Caco-2 (cell line): ENCODE measurements at regions of chr10 and their contacts with region 1.

Region 1: GRCh38 chr10:72319416-72320254 is 35.1 kb downstream of the DNAJB12 start:
- DNase-seq: peak; percentile 88 to 98
- H3K4me3 ChIP-seq: peak overlapping the region; percentile 31
- H3K4me3 Mint-ChIP-seq: peak overlapping the region; percentile 60
- H3K27ac Mint-ChIP-seq: peak overlapping the region; percentile 99
- H3K4me1 ChIP-seq: peaks cover 44% of the 10 kb centered on the region
- H3K4me1 Mint-ChIP-seq: peaks cover 49% of the 10 kb centered on the region
- H3K27me3 ChIP-seq: no peaks in the 10 kb centered on the region
- H3K27me3 Mint-ChIP-seq: no peaks in the 10 kb centered on the region
- CTCF ChIP-seq: no peak

Region 2: DNA sequence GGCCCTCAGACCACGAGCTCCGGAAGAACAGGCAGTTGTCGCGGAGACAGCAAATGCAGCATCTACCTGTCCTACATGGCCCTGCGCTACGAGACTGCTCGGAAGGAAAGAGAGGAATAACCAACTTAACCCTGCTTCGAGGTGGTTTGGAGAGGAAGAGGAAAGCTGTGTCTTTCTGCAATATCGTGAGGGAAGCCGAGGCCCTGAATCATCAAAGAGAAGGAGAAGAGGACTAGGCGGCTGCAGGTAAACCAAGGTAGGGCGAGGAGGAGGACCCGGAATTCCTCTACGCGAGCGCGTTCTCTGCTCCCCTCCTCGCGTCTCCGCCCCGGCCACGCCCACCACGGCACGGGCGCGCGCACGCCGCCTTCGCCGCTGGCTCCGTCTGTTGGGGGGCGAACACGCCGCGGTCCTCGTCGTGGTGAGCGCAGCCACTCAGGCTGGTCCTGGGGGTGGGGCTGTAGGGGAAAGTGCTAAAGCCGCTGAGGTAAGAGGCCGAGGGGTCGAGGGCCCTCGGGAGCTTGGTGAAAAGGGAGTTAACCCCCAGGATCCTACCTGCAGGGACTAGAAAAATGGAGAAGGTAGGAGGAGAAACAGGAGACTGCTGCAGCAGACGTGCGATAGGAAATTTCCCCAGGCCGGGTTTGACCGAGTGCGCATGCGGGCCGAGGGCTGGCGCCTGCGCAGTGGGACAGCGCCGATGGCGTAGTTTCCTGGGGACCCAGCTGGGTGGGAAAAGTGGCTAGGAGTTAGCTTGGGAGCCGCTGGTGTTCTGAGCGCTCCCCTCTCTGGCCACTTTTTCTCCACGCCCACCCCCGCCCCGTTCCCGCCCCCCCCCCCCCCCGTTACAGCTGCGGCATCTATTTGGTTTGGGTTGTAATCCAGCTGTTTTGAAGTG is 103.7 kb before region 1 on chr10 and contains the starts of genes ANAPC16 and ASCC1:
- CTCF ChIA-PET with region 1: interaction called, 6 read pairs
- POLR2A ChIA-PET with region 1: interaction called, 12 read pairs
- intact Hi-C with region 1: no loop called
- DNase-seq: peak; percentile 94 to 99
- H3K4me3 ChIP-seq: peak within 1 kb of the TSS; percentile 77
- H3K4me3 Mint-ChIP-seq: peak within 1 kb of the TSS; percentile 94
- H3K27ac Mint-ChIP-seq: peak within 1 kb of the TSS; percentile 92
- H3K4me1 ChIP-seq: peaks cover 13% of the 10 kb centered on the region; the same call in 1 of the 2 replicates
- H3K4me1 Mint-ChIP-seq: peaks cover 8% of the 10 kb centered on the region
- H3K27me3 ChIP-seq: no peaks in the 10 kb centered on the region
- H3K27me3 Mint-ChIP-seq: no peaks in the 10 kb centered on the region
- CTCF ChIP-seq: no peak
- total RNA-seq, gene ANAPC16: 134 and 144 TPM in 2 replicates
- total RNA-seq, gene ASCC1: 60.1 and 73.7 TPM in 2 replicates

Region 3: DNA sequence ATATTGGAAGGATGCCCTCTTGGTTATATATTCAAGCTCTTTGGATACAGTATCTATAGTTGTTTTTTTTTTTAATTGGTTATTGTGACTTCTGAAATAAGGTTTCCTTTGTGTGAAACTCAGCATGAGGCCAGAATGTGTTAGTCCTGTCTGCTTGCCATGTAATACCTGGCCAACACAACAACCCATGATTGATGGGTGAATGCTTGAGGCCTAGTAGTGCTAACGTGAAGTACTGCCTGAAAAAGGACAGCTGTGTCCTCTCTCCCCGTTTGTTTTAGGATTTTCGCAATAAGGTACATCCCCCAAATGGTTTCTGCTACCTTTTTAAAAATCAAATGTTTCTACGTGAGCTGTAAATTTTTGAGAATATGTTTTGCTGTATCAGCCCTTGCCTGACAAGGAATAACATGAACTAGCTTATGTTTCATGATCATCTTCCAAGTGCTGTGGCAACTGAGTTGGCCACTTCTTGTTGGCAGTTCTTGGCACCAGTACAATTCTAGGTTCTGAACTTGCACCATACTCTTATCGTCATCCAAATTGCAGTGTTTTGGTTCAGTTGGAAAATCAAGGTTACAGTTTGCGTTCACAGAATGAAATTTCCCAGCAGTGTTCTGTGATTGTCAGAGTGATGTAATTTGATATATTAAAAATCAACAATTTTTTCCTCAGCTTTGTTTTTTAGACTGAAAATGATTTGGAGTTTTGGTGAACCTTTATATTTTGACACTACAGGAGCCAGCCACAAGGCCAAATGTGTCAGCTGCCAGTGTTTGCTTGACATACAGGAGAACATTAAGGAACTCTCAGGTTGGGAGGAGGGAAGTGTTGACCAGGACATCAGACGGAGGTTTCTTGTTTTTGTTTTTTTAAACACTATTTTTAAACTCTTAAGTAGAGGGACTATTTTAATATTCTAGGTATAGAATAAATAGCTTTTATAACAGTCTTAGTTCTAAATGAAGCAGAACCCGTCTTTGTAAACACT is 90.1 kb before region 1 on chr10:
- CTCF ChIA-PET with region 1: no interaction called
- POLR2A ChIA-PET with region 1: interaction called, 12 read pairs
- intact Hi-C with region 1: no loop called
- DNase-seq: no peak
- H3K4me3 ChIP-seq: no peak overlapping the region
- H3K4me3 Mint-ChIP-seq: no peak overlapping the region
- H3K27ac Mint-ChIP-seq: no peak overlapping the region
- H3K4me1 ChIP-seq: no peaks in the 10 kb centered on the region
- H3K4me1 Mint-ChIP-seq: peaks cover 18% of the 10 kb centered on the region
- H3K27me3 ChIP-seq: no peaks in the 10 kb centered on the region
- H3K27me3 Mint-ChIP-seq: no peaks in the 10 kb centered on the region
- CTCF ChIP-seq: no peak

Region 4: GRCh38 chr10:72260588-72261322 is 58.9 kb before region 1 on chr10:
- CTCF ChIA-PET with region 1: interaction called, 17 read pairs
- POLR2A ChIA-PET with region 1: interaction called, 36 read pairs
- intact Hi-C with region 1: loop called (anchors 1 kb)
- DNase-seq: peak; percentile 94 to 98
- H3K4me3 ChIP-seq: peak overlapping the region; percentile 61
- H3K4me3 Mint-ChIP-seq: peak overlapping the region; percentile 91
- H3K27ac Mint-ChIP-seq: peak overlapping the region; percentile 96
- H3K4me1 ChIP-seq: peaks cover 22% of the 10 kb centered on the region
- H3K4me1 Mint-ChIP-seq: peaks cover 29% of the 10 kb centered on the region
- H3K27me3 ChIP-seq: no peaks in the 10 kb centered on the region
- H3K27me3 Mint-ChIP-seq: no peaks in the 10 kb centered on the region
- CTCF ChIP-seq: peak in 1 of 2 experiments; percentile 31

Region 5: GRCh38 chr10:72278668-72279393 is 40.8 kb before region 1 on chr10:
- CTCF ChIA-PET with region 1: interaction called, 10 read pairs
- POLR2A ChIA-PET with region 1: interaction called, 127 read pairs
- intact Hi-C with region 1: loop called (anchors 1 kb)
- DNase-seq: no peak
- H3K4me3 ChIP-seq: no peak overlapping the region
- H3K4me3 Mint-ChIP-seq: no peak overlapping the region
- H3K27ac Mint-ChIP-seq: no peak overlapping the region
- H3K4me1 ChIP-seq: peaks cover 15% of the 10 kb centered on the region
- H3K4me1 Mint-ChIP-seq: peaks cover 31% of the 10 kb centered on the region
- H3K27me3 ChIP-seq: no peaks in the 10 kb centered on the region
- H3K27me3 Mint-ChIP-seq: no peaks in the 10 kb centered on the region
- CTCF ChIP-seq: peak in 1 of 2 experiments; percentile 13

Region 6: GRCh38 chr10:72297968-72298773 is 21.5 kb before region 1 on chr10:
- CTCF ChIA-PET with region 1: interaction called, 4 read pairs
- POLR2A ChIA-PET with region 1: interaction called, 10 read pairs
- intact Hi-C with region 1: loop called (anchors 1 kb)
- DNase-seq: peak; percentile 99
- H3K4me3 ChIP-seq: peak overlapping the region; percentile 55
- H3K4me3 Mint-ChIP-seq: peak overlapping the region; percentile 86
- H3K27ac Mint-ChIP-seq: peak overlapping the region; percentile 99
- H3K4me1 ChIP-seq: peaks cover 20% of the 10 kb centered on the region
- H3K4me1 Mint-ChIP-seq: peaks cover 20% of the 10 kb centered on the region
- H3K27me3 ChIP-seq: no peaks in the 10 kb centered on the region
- H3K27me3 Mint-ChIP-seq: no peaks in the 10 kb centered on the region
- CTCF ChIP-seq: no peak

Region 7: GRCh38 chr10:72308320-72308987 is 11.2 kb before region 1 on chr10:
- CTCF ChIA-PET with region 1: interaction called, 8 read pairs
- POLR2A ChIA-PET with region 1: interaction called, 17 read pairs
- intact Hi-C with region 1: no loop called
- DNase-seq: peak; percentile 59 to 74
- H3K4me3 ChIP-seq: no peak overlapping the region
- H3K4me3 Mint-ChIP-seq: no peak overlapping the region
- H3K27ac Mint-ChIP-seq: peak overlapping the region; percentile 48
- H3K4me1 ChIP-seq: peaks cover 31% of the 10 kb centered on the region
- H3K4me1 Mint-ChIP-seq: peaks cover 26% of the 10 kb centered on the region
- H3K27me3 ChIP-seq: no peaks in the 10 kb centered on the region
- H3K27me3 Mint-ChIP-seq: no peaks in the 10 kb centered on the region
- CTCF ChIP-seq: no peak

Region 8: DNA sequence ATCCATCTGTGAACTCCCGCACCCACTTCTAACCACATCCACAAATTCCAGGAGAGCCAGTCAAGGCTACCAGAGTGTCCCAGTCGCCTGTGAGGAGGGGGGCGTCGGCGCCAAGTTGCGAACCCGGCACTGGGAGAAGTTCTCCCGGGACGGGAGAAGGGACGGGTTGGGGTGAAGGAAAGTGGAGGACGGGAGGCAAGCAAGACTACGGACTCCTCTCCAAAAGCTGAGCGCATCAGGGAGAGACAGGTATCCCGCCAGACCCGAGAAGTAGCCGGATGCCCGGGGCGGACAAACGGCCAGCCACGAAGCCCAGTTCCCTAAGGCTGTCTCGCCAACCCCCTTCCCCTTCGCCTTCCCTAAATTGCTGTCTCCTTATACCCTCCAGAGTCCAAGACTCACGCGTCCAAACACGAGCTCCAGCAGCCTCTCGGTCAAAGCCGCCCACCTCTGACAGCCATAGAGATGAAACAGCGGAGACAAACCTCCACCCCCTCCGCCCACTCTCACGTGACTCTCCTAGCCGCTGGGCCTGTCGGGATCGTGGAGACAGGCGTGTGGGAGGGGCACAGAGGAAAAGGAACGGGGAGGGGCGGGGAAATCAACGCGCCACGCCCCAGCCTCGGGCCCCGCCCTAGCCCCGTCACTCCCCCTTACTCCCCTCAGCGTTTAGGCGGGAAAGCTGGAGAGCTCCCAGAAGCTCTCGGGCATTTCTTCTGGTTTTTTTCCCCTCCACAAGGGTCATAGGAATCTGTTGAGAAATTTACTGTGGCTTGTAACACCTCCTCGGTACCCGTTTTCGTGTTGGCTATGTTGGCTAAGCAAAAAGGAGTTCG is 306.2 kb after region 1 on chr10 and contains the start of gene MICU1:
- CTCF ChIA-PET with region 1: no interaction called
- POLR2A ChIA-PET with region 1: no interaction called
- intact Hi-C with region 1: no loop called
- DNase-seq: peak; percentile 98
- H3K4me3 ChIP-seq: peak within 1 kb of the TSS; percentile 59
- H3K4me3 Mint-ChIP-seq: peak within 1 kb of the TSS; percentile 75
- H3K27ac Mint-ChIP-seq: peak within 1 kb of the TSS; percentile 80
- H3K4me1 ChIP-seq: peaks cover 13% of the 10 kb centered on the region; the same call in 1 of the 2 replicates
- H3K4me1 Mint-ChIP-seq: peaks cover 8% of the 10 kb centered on the region
- H3K27me3 ChIP-seq: no peaks in the 10 kb centered on the region
- H3K27me3 Mint-ChIP-seq: no peaks in the 10 kb centered on the region
- CTCF ChIP-seq: no peak
- total RNA-seq, gene MICU1: 68.8 and 83.2 TPM in 2 replicates